ENCODE measurements at regions of chr2 and their contacts with region 1.

Region 1: DNA sequence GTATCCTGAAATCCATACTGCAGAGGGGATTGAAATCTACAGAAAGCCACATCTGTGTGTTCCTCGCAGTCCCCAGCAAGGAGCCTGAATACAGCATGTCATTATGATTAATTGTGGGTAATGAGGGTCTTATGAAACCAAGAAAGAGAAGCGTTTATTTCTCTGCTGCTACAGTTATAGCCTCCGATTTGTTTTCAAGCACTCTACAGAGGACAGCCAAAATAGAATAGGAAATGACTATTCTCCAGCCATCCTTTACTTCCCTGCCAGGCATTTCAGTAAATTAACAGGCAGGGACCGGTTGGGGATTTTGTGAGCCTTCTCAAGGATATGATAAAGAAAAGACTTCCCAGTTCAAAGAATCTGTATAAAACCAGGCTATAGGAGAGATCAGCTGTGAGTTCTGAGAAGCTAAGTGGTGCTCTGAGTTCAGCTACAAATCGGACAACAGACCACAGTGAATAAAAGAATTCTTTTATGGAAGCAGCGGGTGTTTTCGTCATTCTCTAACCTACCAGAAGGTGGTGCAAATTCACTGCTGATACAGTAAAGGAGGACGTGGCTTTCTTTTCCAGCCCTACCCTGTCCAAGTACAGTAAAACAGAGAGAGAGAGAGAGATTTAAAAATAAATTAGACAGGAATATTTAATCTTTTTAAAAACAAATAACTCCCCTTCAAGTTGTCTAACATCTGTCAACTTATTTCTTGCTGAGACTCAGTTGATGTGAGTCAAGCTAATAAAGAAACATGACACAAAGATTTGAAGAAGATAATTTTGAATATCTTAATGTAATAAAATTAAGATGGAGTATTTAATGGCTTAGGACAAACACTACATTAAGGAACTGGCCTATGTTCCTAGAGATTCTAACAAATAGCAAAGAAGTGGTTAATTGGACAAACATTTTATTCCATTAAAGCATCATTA is 133.7 kb downstream of the INSIG2 start:
- H3K4me3 Mint-ChIP-seq: no peak overlapping the region
- H3K27ac Mint-ChIP-seq: no peak overlapping the region
- H3K4me1 Mint-ChIP-seq: peaks cover 15% of the 10 kb centered on the region
- H3K27me3 Mint-ChIP-seq: peaks cover 71% of the 10 kb centered on the region

Region 2: DNA sequence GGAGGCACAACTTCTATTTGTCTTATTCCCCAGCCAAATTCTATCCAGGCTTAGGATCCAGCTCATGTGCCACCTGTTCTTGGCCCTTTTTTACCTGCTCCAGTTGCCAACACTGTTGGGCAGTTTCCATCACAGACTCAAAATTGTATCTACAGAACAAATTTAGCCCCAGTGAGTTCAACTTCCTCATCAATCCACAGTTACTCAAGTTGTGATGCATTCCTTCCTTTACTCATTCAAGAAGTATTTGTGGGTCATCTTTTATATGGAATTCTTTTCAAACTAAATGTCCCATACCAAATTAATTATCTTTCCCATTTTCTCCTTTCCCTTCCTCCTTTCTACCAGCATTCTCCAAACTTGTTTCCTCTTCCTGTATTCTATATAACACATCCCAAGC is 420.1 kb before region 1 on chr2:
- intact Hi-C with region 1: no loop called
- H3K4me3 Mint-ChIP-seq: no peak overlapping the region
- H3K27ac Mint-ChIP-seq: no peak overlapping the region
- H3K4me1 Mint-ChIP-seq: peaks cover 5% of the 10 kb centered on the region
- H3K27me3 Mint-ChIP-seq: peaks cover 33% of the 10 kb centered on the region

Region 3: DNA sequence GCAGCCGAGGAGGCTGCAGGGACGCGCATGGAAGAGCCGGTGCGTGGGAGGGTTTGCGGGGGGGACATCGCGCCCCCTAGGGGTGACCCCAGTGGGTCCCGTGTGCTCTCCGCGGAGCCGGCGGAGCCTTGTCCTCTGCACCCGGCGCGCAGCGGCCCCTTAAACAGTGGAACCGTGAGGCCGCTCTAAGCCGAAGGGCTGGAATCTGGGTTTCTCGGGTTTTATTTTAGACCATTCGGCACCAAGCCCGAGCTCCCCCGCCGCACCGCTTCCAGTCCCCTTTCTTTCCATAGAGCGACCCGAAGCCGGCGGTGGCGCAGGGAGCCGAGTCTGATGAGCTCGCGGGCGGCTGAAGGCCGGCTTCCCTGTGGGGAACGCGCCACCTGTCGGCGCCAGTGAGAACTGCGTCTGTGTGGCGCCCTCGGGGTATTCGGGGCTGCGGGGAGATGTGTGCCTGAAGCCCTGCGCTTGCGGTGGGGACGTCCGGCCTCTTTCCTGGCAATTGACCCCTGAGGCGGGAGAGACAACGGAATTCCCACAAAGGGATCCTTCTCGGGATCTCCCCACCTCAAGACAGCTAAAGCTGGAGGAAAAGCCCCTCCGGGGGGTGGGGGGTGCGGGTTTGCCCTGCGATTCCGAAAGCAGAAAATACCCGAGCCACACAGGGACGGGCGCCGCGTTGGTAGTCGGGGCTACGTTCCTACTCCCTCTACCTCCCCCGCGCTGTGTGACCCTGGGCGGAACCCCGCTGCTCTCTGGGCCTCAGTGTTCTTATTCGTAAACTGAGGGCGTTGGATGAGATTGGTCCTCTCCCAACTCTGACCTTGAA is 633.7 kb after region 1 on chr2:
- intact Hi-C with region 1: loop called (anchors 1 kb)
- H3K4me3 Mint-ChIP-seq: peak overlapping the region; percentile 64
- H3K27ac Mint-ChIP-seq: no peak overlapping the region
- H3K4me1 Mint-ChIP-seq: peaks cover 13% of the 10 kb centered on the region
- H3K27me3 Mint-ChIP-seq: peaks cover 98% of the 10 kb centered on the region

Measured in dendritic cell treated with granulocyte-macrophage colony-stimulating factor and Interleukin-4, amounts not matched to agents 40 ng/mL and 50 ng/mL, for 4 days (primary cell).